Aorta (tissue), 5 donors: ENCODE measurements at regions of chr20 and their contacts with region 1.

Region 1: GRCh38 chr20:48682529-48683251 is 145.1 kb downstream of the PREX1 start:
- DNase-seq: peak; percentile 88 to 89
- ATAC-seq: peak; percentile 47
- H3K4me3 ChIP-seq: no peak overlapping the region
- H3K27ac ChIP-seq: peak overlapping the region; percentile 15 to 62
- H3K4me1 ChIP-seq: peaks cover 0 to 3% of the 10 kb centered on the region in 2 donors
- H3K27me3 ChIP-seq: no peaks in the 10 kb centered on the region

Region 2: GRCh38 chr20:48828022-48828743 is 145.5 kb after region 1 on chr20:
- intact Hi-C with region 1: loop called in 1 of 2 experiments (anchors 5 kb)
- DNase-seq: peak; percentile 91 to 94
- ATAC-seq: peak; percentile 86
- H3K4me3 ChIP-seq: peak overlapping the region; percentile 94 to 97
- H3K27ac ChIP-seq: peak overlapping the region in 1 of 2 donors; percentile 9
- H3K4me1 ChIP-seq: peaks cover 4% of the 10 kb centered on the region in 2 donors
- H3K27me3 ChIP-seq: no peaks in the 10 kb centered on the region